Vagina (tissue), 2 donors: ENCODE measurements at regions of chr2 and their contacts with region 1.

Region 1: GRCh38 chr2:234019888-234020287 is 30.6 kb upstream of the SPP2 start:
- DNase-seq: no peak
- H3K4me3 ChIP-seq: no peak overlapping the region
- H3K27ac ChIP-seq: no peak overlapping the region
- H3K4me1 ChIP-seq: no peaks in the 10 kb centered on the region
- H3K27me3 ChIP-seq: no peaks in the 10 kb centered on the region
- CTCF ChIP-seq: no peak
- POLR2A ChIP-seq: no peak

Region 2: DNA sequence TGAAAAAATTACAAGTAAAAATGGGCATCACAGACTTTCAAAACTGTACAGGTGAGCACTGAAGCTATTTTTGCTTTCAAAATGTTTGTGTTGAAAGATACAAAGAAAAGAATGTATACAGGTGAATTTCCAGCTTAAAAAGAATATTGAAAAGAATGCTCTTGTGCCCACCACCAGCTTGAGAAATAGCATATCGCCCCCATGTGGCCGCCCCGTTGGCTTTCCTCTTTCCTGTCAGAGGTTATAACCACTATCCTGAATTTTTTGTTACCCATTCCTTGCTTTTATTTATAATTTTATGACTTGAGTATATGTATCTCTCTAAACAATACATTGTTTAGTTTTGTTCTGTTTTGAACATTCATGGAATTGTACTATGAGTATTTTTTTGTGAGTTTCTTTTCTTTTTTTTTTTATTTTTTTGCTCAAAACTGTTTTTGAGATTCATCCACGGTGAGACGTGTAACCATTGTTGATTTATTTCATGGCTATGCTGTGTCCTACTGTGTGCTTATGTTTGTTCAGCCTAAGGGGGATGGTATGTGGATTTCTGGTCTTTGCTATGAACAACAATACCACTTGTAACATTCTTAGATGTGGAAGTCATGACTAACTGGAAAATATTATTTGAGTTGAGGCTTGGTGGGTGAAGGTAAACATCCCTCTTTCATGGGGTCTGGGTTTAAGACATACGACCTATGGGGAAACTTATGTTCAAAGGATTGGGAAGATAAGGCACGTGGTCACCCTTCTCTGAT is 91.1 kb before region 1 on chr2:
- intact Hi-C with region 1: no loop called
- DNase-seq: no peak
- H3K4me3 ChIP-seq: no peak overlapping the region
- H3K27ac ChIP-seq: no peak overlapping the region
- H3K4me1 ChIP-seq: peaks cover 6% of the 10 kb centered on the region
- H3K27me3 ChIP-seq: no peaks in the 10 kb centered on the region
- CTCF ChIP-seq: no peak
- POLR2A ChIP-seq: no peak

Region 3: GRCh38 chr2:234033174-234033573 is 13.3 kb after region 1 on chr2:
- intact Hi-C with region 1: loop called (anchors 1 kb)
- DNase-seq: no peak
- H3K4me3 ChIP-seq: no peak overlapping the region
- H3K27ac ChIP-seq: no peak overlapping the region
- H3K4me1 ChIP-seq: no peaks in the 10 kb centered on the region
- H3K27me3 ChIP-seq: no peaks in the 10 kb centered on the region
- CTCF ChIP-seq: no peak
- POLR2A ChIP-seq: no peak